ENCODE measurements at regions of chr1 and their contacts with region 1.

Region 1: GRCh38 chr1:37449936-37450335 is 24.4 kb upstream of the ZC3H12A start:
- DNase-seq: no peak
- ATAC-seq: no peak
- H3K4me3 ChIP-seq: no peak overlapping the region
- H3K27ac ChIP-seq: no peak overlapping the region
- H3K4me1 ChIP-seq: peaks cover 1% of the 10 kb centered on the region; the same call in 1 of the 2 replicates
- H3K27me3 ChIP-seq: no peaks in the 10 kb centered on the region; the same call in 1 of the 2 replicates
- CTCF ChIP-seq: no peak

Region 2: DNA sequence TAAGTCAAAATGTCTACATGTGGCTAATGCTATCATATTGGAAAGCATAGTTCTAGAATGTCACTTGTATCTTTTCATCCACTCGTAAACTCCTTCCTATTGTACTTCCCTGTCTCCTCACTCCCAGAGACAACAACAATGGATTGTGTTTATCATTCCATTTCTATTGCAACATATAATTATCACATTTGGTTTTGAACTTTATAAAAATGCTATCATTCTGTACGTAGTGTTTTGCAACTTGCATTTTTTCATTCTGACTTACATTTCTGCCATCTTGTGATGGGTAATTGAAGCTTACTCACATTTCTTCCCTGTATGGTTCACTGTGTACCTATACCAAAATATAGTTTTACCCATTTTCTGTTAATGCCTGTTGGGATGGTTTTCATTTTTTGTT is 952.7 kb before region 1 on chr1:
- CTCF ChIA-PET with region 1: interaction called, 10 read pairs
- POLR2A ChIA-PET with region 1: no interaction called
- in situ Hi-C with region 1: no loop called
- intact Hi-C with region 1: no loop called
- DNase-seq: no peak
- ATAC-seq: no peak
- H3K4me3 ChIP-seq: no peak overlapping the region
- H3K27ac ChIP-seq: no peak overlapping the region
- H3K4me1 ChIP-seq: no peaks in the 10 kb centered on the region
- H3K27me3 ChIP-seq: peaks cover 5% of the 10 kb centered on the region
- CTCF ChIP-seq: no peak